CD14-positive monocyte (primary cell): ENCODE measurements at regions of chr6 and their contacts with region 1.

Region 1: DNA sequence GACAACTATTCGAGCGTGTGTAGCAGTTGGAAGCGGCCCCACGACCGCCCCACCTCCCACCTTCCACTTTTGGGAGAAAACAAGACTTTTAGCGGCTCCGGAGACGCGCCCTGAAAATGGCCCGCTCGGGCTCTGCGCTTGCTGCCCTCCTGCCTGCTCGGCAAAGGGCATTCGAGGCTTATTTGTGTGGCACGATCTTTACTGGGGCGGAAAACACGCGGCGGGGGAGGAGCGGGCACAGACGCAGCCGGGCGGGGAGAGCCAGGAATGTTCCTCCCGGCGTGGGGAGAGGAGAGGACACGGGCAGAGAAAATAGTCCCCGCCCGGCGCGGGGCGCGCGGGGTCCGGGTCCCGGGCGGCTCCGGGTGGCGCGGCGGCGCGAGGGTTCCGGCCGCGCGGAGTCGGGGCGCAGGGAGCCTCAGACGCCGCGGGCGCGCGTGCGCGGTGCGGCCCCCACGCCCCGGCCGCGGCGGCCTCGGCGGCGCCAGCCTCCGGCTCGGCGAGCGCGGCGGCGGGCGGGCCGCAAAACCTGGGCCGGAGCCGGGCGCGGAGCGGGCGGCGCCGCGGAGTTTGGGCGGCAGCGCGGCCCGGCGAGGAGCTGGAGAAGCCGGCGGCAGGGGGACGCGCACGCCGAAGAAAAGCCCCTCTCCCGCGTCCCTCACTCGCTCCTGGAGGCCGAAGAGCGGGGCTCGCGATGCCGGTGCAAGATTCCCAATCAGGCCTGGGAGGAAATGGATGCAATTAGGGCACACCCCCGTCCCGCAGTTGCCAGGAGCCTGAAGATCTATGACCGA is 90.0 kb upstream of the ARID1B start:
- DNase-seq: peak; percentile 61 to 79 (median 73)
- H3K4me3 ChIP-seq: peak overlapping the region; percentile 68 to 86 (median 85)
- H3K4me3 Mint-ChIP-seq: peak overlapping the region; percentile 94 to 96
- H3K27ac ChIP-seq: peak overlapping the region; percentile 88 to 89
- H3K27ac Mint-ChIP-seq: peak overlapping the region; percentile 85 to 96 (median 94)
- H3K4me1 ChIP-seq: peaks cover 27 to 35% of the 10 kb centered on the region in 2 donors
- H3K4me1 Mint-ChIP-seq: peaks cover 32% of the 10 kb centered on the region
- H3K27me3 ChIP-seq: no peaks in the 10 kb centered on the region
- H3K27me3 Mint-ChIP-seq: peaks cover 2 to 7% (median 6%) of the 10 kb centered on the region in 3 donors
- CTCF ChIP-seq: no peak

Region 2: DNA sequence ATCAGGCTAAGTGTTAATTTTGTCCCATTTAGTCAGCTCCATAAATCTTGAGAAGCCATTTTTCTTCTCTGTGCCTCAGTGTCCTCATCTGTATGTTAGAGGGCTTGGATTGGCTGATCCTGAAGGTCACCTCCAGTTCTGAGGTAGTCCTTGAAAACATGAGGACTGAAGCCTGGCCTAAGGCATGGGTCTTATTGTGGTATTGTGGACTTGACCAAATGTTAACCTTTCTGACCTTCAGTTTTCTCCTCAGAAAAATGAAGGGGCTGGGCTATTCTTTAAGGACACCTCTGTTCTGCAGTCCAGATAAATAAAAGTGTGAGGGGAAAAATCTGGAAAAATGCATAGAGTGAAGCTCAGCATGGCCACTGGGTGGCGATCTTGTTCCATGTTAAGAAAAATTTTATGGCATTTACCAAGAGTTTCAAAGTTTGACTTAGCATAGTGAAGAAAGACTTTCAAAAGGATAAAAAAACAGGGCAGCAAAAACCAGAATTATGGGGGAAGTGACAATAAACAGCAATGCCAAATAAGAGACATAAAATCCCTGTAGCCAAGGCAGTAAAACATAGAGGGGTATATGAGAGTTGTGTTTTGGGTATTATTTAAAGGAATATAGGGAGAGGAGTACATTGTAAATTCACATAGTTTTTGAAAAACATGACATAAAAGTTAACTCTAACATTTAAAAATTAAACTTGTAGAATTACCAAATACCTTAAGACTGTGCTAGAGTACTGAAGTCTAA is 1359.7 kb before region 1 on chr6:
- intact Hi-C with region 1: loop called in 1 of 2 experiments (anchors 5 kb)
- DNase-seq: peak; percentile 53 to 58 (median 58)
- H3K4me3 ChIP-seq: no peak overlapping the region
- H3K4me3 Mint-ChIP-seq: no peak overlapping the region
- H3K27ac ChIP-seq: no peak overlapping the region
- H3K27ac Mint-ChIP-seq: peak overlapping the region in 4 of 7 donors; percentile 0 to 33 (median 29)
- H3K4me1 ChIP-seq: no peaks in the 10 kb centered on the region
- H3K4me1 Mint-ChIP-seq: peaks cover 2% of the 10 kb centered on the region
- H3K27me3 ChIP-seq: no peaks in the 10 kb centered on the region
- H3K27me3 Mint-ChIP-seq: peaks cover 0 to 5% (median 0%) of the 10 kb centered on the region in 3 donors
- CTCF ChIP-seq: peak; percentile 86

Region 3: DNA sequence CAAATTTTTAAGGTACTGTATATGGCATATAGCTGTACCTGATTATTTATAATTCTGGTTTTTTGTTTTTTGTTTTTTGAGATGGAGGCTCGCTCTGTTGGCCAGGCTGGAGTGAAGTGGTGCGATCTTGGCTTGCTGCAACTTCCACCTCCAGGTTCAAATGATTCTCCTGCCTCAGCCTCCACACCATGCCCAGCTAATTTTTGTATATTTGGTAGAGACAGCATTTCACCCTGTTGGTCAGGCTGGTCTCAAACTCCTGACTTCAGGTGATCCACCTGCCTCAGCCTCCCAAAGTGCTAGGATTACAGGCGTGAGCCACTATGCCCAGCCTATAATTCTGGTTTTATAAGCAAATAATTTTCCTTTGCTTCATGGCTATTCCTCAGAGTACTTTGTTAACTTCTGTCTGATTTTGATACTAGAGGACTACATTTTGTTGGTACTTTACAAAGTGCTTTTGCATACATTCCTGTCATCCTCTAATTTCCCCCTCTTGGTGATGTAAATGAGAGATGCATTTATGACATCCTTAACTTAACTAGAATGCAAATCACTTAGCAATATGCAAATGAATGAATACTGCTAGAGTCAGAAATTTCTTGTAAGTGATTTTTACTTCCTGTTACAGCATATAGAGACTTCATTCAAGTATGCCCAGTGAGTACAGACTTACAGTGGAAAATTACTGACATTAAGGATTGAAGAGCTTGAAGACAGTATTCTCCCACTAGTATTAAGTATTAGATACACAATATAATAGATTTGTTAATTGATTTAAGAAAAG is 54.3 kb after region 1 on chr6:
- intact Hi-C with region 1: no loop called
- DNase-seq: no peak
- H3K4me3 ChIP-seq: no peak overlapping the region
- H3K4me3 Mint-ChIP-seq: no peak overlapping the region
- H3K27ac ChIP-seq: no peak overlapping the region
- H3K27ac Mint-ChIP-seq: no peak overlapping the region
- H3K4me1 ChIP-seq: no peaks in the 10 kb centered on the region
- H3K4me1 Mint-ChIP-seq: no peaks in the 10 kb centered on the region
- H3K27me3 ChIP-seq: no peaks in the 10 kb centered on the region
- H3K27me3 Mint-ChIP-seq: peaks cover 0 to 2% (median 2%) of the 10 kb centered on the region in 3 donors
- CTCF ChIP-seq: no peak

Region 4: DNA sequence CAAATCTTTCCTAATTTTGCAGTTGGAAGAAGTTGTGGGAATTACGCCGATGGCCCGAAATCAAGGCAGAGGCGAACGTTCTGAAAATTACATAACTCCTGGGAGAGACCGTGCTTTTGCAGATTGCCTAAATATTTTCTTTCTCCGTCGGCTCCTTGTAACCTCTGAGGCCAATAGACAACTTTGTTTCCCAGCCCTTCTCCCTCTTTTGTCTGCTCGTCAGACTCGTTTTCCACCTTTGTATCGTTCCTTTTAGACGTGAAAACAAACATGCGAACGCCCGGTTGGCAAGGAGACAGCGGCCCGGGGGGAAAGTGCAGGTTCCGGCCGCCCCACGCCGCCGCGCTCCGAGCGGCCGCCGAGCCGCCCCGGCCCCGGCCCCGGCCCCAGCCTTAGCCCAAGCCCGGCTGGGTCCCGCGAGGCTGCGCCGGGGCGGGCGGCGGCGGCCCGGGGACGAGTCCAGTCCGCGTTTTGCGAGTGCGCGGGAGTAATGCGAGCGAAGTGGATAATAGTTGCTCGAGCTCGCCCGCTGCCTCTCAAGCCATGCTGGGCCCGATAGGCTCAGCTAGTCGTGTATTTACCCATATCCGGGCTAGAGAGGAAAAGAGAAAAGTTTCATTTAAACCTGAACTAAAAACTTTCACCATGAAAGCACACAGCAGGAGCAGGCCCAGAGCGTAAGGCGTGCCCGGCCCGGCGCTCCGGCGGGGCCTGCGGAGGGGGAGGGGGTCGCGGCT is 89.8 kb after region 1 on chr6 and contains the start of gene ARID1B:
- intact Hi-C with region 1: loop called (anchors 1 kb)
- DNase-seq: peak; percentile 58 to 72 (median 71)
- H3K4me3 ChIP-seq: peak within 1 kb of the TSS; percentile 76 to 95 (median 90)
- H3K4me3 Mint-ChIP-seq: peak within 1 kb of the TSS; percentile 92 to 95
- H3K27ac ChIP-seq: peak within 1 kb of the TSS; percentile 83 to 87
- H3K27ac Mint-ChIP-seq: peak within 1 kb of the TSS; percentile 83 to 96 (median 96)
- H3K4me1 ChIP-seq: peaks cover 24 to 44% of the 10 kb centered on the region in 2 donors
- H3K4me1 Mint-ChIP-seq: peaks cover 39% of the 10 kb centered on the region
- H3K27me3 ChIP-seq: peaks cover 17 to 18% of the 10 kb centered on the region in 2 donors
- H3K27me3 Mint-ChIP-seq: peaks cover 20 to 26% (median 21%) of the 10 kb centered on the region in 3 donors
- CTCF ChIP-seq: no peak
- polyA plus RNA-seq, gene ARID1B: 3.2 to 22.1 (median 3.8) TPM

Region 5: DNA sequence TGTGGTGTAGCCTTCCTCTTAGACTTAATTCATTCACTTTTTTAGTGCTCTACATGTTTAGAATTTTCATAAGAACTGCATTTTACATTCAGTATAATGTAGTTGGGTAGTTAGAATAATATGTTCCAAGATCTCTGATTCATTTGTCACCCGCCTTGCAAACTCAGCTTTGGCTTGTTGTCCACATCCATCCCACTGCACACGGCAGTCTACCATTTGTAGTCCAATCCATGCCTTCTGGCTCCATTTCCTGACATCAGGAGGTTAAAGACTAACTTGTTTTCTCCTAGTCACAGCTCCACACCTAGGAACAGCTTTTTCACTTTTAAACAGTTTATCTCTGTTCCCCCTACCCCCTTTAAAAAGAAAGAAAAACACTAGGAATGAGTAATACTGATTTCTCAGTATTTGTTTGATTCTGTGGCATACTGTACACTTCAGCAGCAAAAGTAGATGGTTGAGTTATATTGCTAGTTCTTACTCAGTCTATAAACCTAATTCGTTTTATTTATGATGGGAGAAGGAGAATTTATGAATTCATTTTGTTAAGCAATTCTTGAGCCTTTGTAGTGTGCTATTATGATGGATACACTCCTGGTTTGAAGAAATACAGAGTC is 270.8 kb after region 1 on chr6:
- intact Hi-C with region 1: loop called in 1 of 2 experiments (anchors 5 kb)
- DNase-seq: no peak
- H3K4me3 ChIP-seq: no peak overlapping the region
- H3K4me3 Mint-ChIP-seq: no peak overlapping the region
- H3K27ac ChIP-seq: no peak overlapping the region
- H3K27ac Mint-ChIP-seq: no peak overlapping the region
- H3K4me1 ChIP-seq: peaks cover 0 to 1% of the 10 kb centered on the region in 2 donors
- H3K4me1 Mint-ChIP-seq: peaks cover 18% of the 10 kb centered on the region
- H3K27me3 ChIP-seq: no peaks in the 10 kb centered on the region
- H3K27me3 Mint-ChIP-seq: no peaks in the 10 kb centered on the region
- CTCF ChIP-seq: no peak